ENCODE measurements at regions of chr2 and their contacts with region 1.

Region 1: GRCh38 chr2:28870146-28870891 is at the start of gene TRMT61B:
- DNase-seq: peak; percentile 96
- H3K4me3 Mint-ChIP-seq: peak within 1 kb of the TSS; percentile 96
- H3K27ac Mint-ChIP-seq: peak within 1 kb of the TSS; percentile 91
- H3K4me1 Mint-ChIP-seq: peaks cover 19% of the 10 kb centered on the region
- H3K27me3 Mint-ChIP-seq: peaks cover 5% of the 10 kb centered on the region
- total RNA-seq, gene TRMT61B: 15.1 and 17.3 TPM in 2 replicates

Region 2: DNA sequence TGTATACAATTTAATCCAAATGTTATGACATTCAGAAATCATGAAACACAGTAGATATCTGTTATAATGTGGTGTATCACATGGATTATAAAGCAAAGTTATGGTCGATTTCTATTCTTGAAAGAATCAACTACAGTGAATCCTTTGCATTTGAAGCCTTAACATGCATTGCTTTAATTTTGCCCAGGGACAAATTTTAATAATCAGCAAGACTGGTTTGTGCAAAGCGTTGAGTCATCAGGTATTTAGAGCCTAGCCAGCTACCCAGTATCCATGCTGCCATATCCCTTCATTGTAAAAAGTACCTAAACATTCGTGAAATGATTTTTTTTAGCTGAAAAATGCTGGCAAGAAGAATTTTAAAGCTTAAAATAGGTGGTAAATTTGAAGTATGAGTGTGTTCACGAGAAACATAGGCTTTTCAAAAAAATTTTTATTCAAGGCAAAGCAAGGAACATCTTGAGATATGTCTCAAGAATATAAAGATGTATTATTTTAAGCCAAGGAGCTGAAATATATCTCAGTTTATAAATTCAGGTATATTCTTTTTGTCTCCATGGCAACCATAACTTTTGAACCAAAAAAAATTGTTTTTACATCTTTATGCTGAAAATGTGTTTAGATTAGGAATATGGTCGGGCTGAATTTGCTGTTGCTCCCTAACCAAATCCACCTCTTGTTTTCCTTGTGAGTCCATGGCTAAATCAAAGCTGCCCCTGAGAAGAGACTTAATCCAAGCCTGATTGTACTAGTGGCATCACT is 68.4 kb before region 1 on chr2:
- intact Hi-C with region 1: no loop called
- DNase-seq: no peak
- H3K4me3 Mint-ChIP-seq: no peak overlapping the region
- H3K27ac Mint-ChIP-seq: no peak overlapping the region
- H3K4me1 Mint-ChIP-seq: peaks cover 6% of the 10 kb centered on the region
- H3K27me3 Mint-ChIP-seq: no peaks in the 10 kb centered on the region

Region 3: GRCh38 chr2:28894470-28895177 is 24.3 kb after region 1 on chr2 and contains the start of gene WDR43:
- intact Hi-C with region 1: loop called (anchors 1 kb)
- DNase-seq: peak; percentile 97
- H3K4me3 Mint-ChIP-seq: peak within 1 kb of the TSS; percentile 99
- H3K27ac Mint-ChIP-seq: peak within 1 kb of the TSS; percentile 95
- H3K4me1 Mint-ChIP-seq: peaks cover 38% of the 10 kb centered on the region
- H3K27me3 Mint-ChIP-seq: peaks cover 7% of the 10 kb centered on the region
- total RNA-seq, gene WDR43: 117 and 128 TPM in 2 replicates

Measured in activated T-helper 2 cell treated with anti-CD3 and anti-CD28 coated beads, Interferon-gamma antibody, Interleukin-2, Interleukin-4, amounts not matched to agents 10 μg/mL and 5 μg/mL and 100 μg/mL, durations not matched to agents 14 hours and 24 hours and 36 hours (primary cell).